Activated B cell treated with CpG ODN at 0.5 μM for 24 hours (primary cell): ENCODE measurements at regions of chr9 and their contacts with region 1.

Region 1: DNA sequence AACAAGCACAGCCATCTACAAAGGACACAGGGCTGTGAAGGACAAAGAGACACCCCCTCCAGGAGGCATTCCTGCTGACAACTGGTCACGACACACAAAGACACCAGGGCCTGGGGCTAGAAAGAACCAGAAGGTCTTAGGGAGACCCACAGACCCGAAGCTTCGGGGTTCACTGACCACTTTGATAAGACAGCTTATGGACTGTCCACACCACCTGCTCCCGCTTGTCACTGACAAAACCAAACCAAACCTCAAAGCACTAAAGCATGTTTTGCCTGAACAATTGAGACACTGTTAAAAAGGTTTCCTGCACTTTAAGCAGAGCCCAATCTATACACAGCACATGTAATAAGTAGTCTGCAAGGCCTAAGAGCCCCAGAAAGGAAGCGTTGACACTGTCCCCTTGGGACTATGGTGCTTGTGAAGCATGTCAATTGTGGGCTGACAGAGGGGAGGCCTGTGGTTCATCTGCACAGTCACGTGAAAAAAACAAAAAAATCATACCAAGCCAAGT is 185.0 kb downstream of the GAPVD1 start:
- DNase-seq: peak; percentile 52
- ATAC-seq: peak; percentile 100
- H3K4me3 Mint-ChIP-seq: peak overlapping the region; percentile 68
- H3K27ac Mint-ChIP-seq: peak overlapping the region; percentile 74
- H3K4me1 Mint-ChIP-seq: peaks cover 44% of the 10 kb centered on the region
- H3K27me3 Mint-ChIP-seq: no peaks in the 10 kb centered on the region
- CTCF ChIP-seq: no peak

Region 2: GRCh38 chr9:125407974-125408900 is 38.4 kb before region 1 on chr9:
- CTCF ChIA-PET with region 1: no interaction called
- POLR2A ChIA-PET with region 1: no interaction called
- intact Hi-C with region 1: loop called (anchors 1 kb)
- DNase-seq: peak; percentile 79
- ATAC-seq: peak; percentile 86
- H3K4me3 Mint-ChIP-seq: peak overlapping the region; percentile 75
- H3K27ac Mint-ChIP-seq: no peak overlapping the region
- H3K4me1 Mint-ChIP-seq: peaks cover 16% of the 10 kb centered on the region
- H3K27me3 Mint-ChIP-seq: peaks cover 23% of the 10 kb centered on the region
- CTCF ChIP-seq: peak; percentile 68

Region 3: GRCh38 chr9:125462861-125463291 is 16.2 kb after region 1 on chr9:
- CTCF ChIA-PET with region 1: no interaction called
- POLR2A ChIA-PET with region 1: no interaction called
- intact Hi-C with region 1: no loop called
- DNase-seq: no peak
- ATAC-seq: no peak
- H3K4me3 Mint-ChIP-seq: no peak overlapping the region
- H3K27ac Mint-ChIP-seq: no peak overlapping the region
- H3K4me1 Mint-ChIP-seq: no peaks in the 10 kb centered on the region
- H3K27me3 Mint-ChIP-seq: no peaks in the 10 kb centered on the region
- CTCF ChIP-seq: no peak

Region 4: GRCh38 chr9:125476645-125477044 is 30.0 kb after region 1 on chr9:
- CTCF ChIA-PET with region 1: no interaction called
- POLR2A ChIA-PET with region 1: no interaction called
- intact Hi-C with region 1: no loop called
- DNase-seq: no peak
- ATAC-seq: no peak
- H3K4me3 Mint-ChIP-seq: no peak overlapping the region
- H3K27ac Mint-ChIP-seq: no peak overlapping the region
- H3K4me1 Mint-ChIP-seq: no peaks in the 10 kb centered on the region
- H3K27me3 Mint-ChIP-seq: no peaks in the 10 kb centered on the region
- CTCF ChIP-seq: no peak

Region 5: DNA sequence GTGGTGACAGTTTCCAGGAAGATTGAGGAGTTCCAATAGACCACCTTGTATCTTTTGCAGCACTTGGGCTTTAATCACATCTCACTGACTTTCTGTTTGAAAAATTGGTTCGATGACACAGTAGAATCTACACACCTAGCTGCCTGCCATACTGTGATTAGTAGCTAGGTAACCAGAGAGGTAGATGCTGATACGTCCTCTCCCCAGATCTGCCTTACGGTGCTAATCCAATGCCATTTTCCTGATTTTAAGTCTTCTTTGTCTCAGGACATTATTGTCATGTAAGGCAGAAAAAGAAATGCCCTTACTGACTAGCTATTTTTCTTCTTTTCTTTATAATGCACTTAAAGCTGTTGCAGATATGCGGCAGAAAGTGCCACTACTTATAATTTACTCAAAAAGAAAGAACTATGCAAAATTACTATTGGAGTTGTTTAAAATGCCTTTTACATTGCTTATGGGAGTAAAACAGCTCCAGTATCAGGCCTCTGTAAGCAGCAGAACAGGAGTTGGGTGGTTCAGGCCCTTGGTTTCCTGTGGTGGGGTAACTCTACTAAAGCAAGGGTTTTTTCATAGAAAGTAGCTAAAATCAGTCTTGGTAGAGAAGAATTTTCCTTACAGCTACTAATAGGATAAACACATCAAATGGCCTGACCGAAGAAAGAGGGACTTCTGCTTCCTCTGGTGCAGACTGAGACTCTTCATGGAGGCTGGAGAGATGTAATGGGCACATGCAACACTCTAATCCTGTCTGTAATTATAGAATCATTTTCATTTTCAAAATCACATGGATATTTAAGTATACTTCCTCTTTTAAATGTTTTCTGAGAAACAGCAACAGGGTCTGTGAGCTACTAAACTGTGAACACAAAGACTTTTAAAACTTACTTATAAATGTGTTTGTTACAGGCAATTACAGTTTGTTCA is 83.2 kb after region 1 on chr9:
- CTCF ChIA-PET with region 1: no interaction called
- POLR2A ChIA-PET with region 1: no interaction called
- intact Hi-C with region 1: loop called (anchors 2 kb)
- DNase-seq: no peak
- ATAC-seq: peak; percentile 71
- H3K4me3 Mint-ChIP-seq: peak overlapping the region; percentile 50
- H3K27ac Mint-ChIP-seq: peak overlapping the region; percentile 94
- H3K4me1 Mint-ChIP-seq: peaks cover 73% of the 10 kb centered on the region
- H3K27me3 Mint-ChIP-seq: no peaks in the 10 kb centered on the region
- CTCF ChIP-seq: no peak